ENCODE measurements at regions of chr5 and their contacts with region 1.

Region 1: DNA sequence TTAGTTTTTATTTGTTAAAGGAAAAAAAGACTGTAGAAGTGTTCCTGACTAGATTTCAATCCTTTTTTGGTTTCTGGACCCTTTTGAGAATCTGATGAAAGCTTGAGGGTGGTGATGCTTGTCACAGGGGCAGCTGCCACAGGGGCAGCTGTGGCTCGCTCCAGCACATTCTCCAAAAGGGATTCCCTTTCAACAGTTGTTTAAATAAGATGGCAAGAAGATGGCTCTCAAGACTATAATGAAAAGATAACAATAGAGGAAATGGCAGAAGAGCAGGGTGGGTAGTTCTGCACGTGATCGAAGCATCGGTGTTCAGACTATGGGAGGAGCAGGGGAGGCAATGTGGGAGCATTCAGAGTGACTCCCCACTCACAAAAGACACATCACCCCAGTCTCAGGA is 46.5 kb upstream of the TNFAIP8 start:
- DNase-seq: no peak
- ATAC-seq: peak; percentile 24
- H3K4me3 ChIP-seq: peak overlapping the region; percentile 31
- H3K4me3 Mint-ChIP-seq: peak overlapping the region; percentile 71 to 90 (median 83)
- H3K27ac ChIP-seq: peak overlapping the region; percentile 64
- H3K27ac Mint-ChIP-seq: peak overlapping the region; percentile 92 to 99 (median 97)
- H3K4me1 ChIP-seq: peaks cover 86 to 94% of the 10 kb centered on the region in 2 donors
- H3K4me1 Mint-ChIP-seq: peaks cover 55 to 99% (median 95%) of the 10 kb centered on the region in 7 donors
- H3K27me3 ChIP-seq: no peaks in the 10 kb centered on the region
- H3K27me3 Mint-ChIP-seq: no peaks in the 10 kb centered on the region

Region 2: GRCh38 chr5:119070828-119071572 is 238.3 kb before region 1 on chr5 and contains the start of gene DMXL1:
- CTCF ChIA-PET with region 1: no interaction called
- POLR2A ChIA-PET with region 1: interaction called, 6 read pairs
- intact Hi-C with region 1: loop called (anchors 2 kb)
- DNase-seq: peak; percentile 94 to 99 (median 98)
- ATAC-seq: peak; percentile 92
- H3K4me3 ChIP-seq: peak within 1 kb of the TSS; percentile 63
- H3K4me3 Mint-ChIP-seq: peak within 1 kb of the TSS; percentile 90 to 100 (median 98)
- H3K27ac ChIP-seq: peak within 1 kb of the TSS; percentile 93
- H3K27ac Mint-ChIP-seq: peak within 1 kb of the TSS; percentile 96 to 100 (median 99)
- H3K4me1 ChIP-seq: peaks cover 22 to 25% of the 10 kb centered on the region in 2 donors
- H3K4me1 Mint-ChIP-seq: peaks cover 24 to 44% (median 38%) of the 10 kb centered on the region in 7 donors
- H3K27me3 ChIP-seq: no peaks in the 10 kb centered on the region
- H3K27me3 Mint-ChIP-seq: peaks cover 0 to 2% (median 0%) of the 10 kb centered on the region in 5 donors
- total RNA-seq, gene DMXL1: 30.5 to 40.8 (median 32.4) TPM

Region 3: DNA sequence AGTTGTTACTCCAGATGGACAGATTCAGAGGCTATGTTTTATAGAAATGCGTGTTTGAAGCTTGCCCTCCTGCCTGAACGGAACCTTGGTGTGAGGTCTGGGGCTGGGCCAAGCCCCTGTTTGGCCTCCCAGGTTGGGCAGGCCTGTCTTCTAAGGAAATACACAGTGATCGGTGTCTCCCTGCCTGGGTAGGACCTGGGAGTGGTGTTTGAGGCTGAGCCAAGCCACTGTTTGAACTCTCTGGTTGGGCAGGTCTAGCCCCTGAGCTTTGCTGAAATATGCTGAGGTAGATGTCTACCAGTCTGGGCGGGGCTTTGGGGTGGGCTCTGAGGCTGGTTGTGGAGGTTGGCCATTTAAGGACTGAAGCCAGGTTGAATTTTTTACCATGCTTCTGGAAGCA is 147.9 kb before region 1 on chr5:
- CTCF ChIA-PET with region 1: no interaction called
- POLR2A ChIA-PET with region 1: no interaction called
- intact Hi-C with region 1: no loop called
- DNase-seq: no peak
- ATAC-seq: no peak
- H3K4me3 ChIP-seq: no peak overlapping the region
- H3K4me3 Mint-ChIP-seq: no peak overlapping the region
- H3K27ac ChIP-seq: no peak overlapping the region
- H3K27ac Mint-ChIP-seq: peak overlapping the region in 1 of 9 donors; percentile 30
- H3K4me1 ChIP-seq: no peaks in the 10 kb centered on the region
- H3K4me1 Mint-ChIP-seq: peaks cover 0 to 5% (median 0%) of the 10 kb centered on the region in 7 donors
- H3K27me3 ChIP-seq: no peaks in the 10 kb centered on the region
- H3K27me3 Mint-ChIP-seq: no peaks in the 10 kb centered on the region

Region 4: DNA sequence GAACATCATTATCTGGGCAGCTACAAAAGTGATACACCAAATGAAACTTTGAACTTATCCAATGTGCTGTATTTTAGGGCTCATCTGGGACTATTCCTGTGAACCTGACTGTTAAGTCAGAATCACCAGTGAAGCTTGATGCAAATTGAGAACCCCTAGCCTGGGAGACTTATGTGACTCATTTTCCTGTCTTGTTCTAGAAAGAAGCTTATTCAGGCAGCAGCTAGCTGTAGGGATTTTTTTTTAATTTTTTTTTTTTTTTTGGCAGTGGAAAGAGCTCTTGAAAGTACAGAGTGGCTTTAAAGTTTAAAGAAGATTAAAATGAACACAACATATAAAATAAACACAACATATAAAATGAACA is 34.6 kb before region 1 on chr5:
- CTCF ChIA-PET with region 1: interaction called, 10 read pairs
- POLR2A ChIA-PET with region 1: interaction called, 466 read pairs
- intact Hi-C with region 1: loop called (anchors 1 to 2 kb)
- DNase-seq: peak in 1 of 9 donors; percentile 79
- ATAC-seq: peak; percentile 45
- H3K4me3 ChIP-seq: peak overlapping the region; percentile 52
- H3K4me3 Mint-ChIP-seq: peak overlapping the region; percentile 86 to 100 (median 98)
- H3K27ac ChIP-seq: peak overlapping the region; percentile 85
- H3K27ac Mint-ChIP-seq: peak overlapping the region; percentile 73 to 99 (median 95)
- H3K4me1 ChIP-seq: peaks cover 74 to 81% of the 10 kb centered on the region in 2 donors
- H3K4me1 Mint-ChIP-seq: peaks cover 84 to 98% (median 91%) of the 10 kb centered on the region in 7 donors
- H3K27me3 ChIP-seq: no peaks in the 10 kb centered on the region
- H3K27me3 Mint-ChIP-seq: peaks cover 0 to 2% (median 0%) of the 10 kb centered on the region in 5 donors

Region 5: GRCh38 chr5:119290161-119290569 is 19.2 kb before region 1 on chr5:
- CTCF ChIA-PET with region 1: interaction called, 4 read pairs
- POLR2A ChIA-PET with region 1: interaction called, 466 read pairs
- intact Hi-C with region 1: loop called in 1 of 2 experiments (anchors 1 kb)
- DNase-seq: peak in 1 of 9 donors; percentile 39
- ATAC-seq: peak; percentile 62
- H3K4me3 ChIP-seq: peak overlapping the region; percentile 47
- H3K4me3 Mint-ChIP-seq: peak overlapping the region; percentile 63 to 97 (median 82)
- H3K27ac ChIP-seq: peak overlapping the region; percentile 82
- H3K27ac Mint-ChIP-seq: peak overlapping the region; percentile 87 to 100 (median 96)
- H3K4me1 ChIP-seq: peaks cover 65% of the 10 kb centered on the region in 2 donors
- H3K4me1 Mint-ChIP-seq: peaks cover 67 to 95% (median 84%) of the 10 kb centered on the region in 7 donors
- H3K27me3 ChIP-seq: no peaks in the 10 kb centered on the region
- H3K27me3 Mint-ChIP-seq: no peaks in the 10 kb centered on the region

Region 6: GRCh38 chr5:120055858-120056257 is 746.5 kb after region 1 on chr5:
- CTCF ChIA-PET with region 1: no interaction called
- POLR2A ChIA-PET with region 1: no interaction called
- intact Hi-C with region 1: no loop called
- DNase-seq: no peak
- ATAC-seq: no peak
- H3K4me3 ChIP-seq: no peak overlapping the region
- H3K4me3 Mint-ChIP-seq: no peak overlapping the region
- H3K27ac ChIP-seq: no peak overlapping the region
- H3K27ac Mint-ChIP-seq: no peak overlapping the region
- H3K4me1 ChIP-seq: no peaks in the 10 kb centered on the region
- H3K4me1 Mint-ChIP-seq: no peaks in the 10 kb centered on the region
- H3K27me3 ChIP-seq: no peaks in the 10 kb centered on the region
- H3K27me3 Mint-ChIP-seq: no peaks in the 10 kb centered on the region

Measured in naive thymus-derived CD4-positive, alpha-beta T cell (primary cell).